ENCODE measurements at regions of chr18 and their contacts with region 1.

Region 1: GRCh38 chr18:63936156-63936931 is 12.8 kb upstream of the HMSD start:
- DNase-seq: peak; percentile 14 to 60 (median 24)
- ATAC-seq: peak; percentile 99
- H3K4me3 ChIP-seq: no peak overlapping the region
- H3K27ac ChIP-seq: no peak overlapping the region
- H3K4me1 ChIP-seq: peaks cover 0 to 6% of the 10 kb centered on the region in 2 experiments; a peak in 2 of 5 replicates
- H3K27me3 ChIP-seq: no peaks in the 10 kb centered on the region
- CTCF ChIP-seq: peak; percentile 34 to 48 (median 44); a peak in 5 of 6 replicates
- EP300 ChIP-seq: no peak
- POLR2A ChIP-seq: no peak
- RAD21 ChIP-seq: peak; percentile 38 to 39

Region 2: DNA sequence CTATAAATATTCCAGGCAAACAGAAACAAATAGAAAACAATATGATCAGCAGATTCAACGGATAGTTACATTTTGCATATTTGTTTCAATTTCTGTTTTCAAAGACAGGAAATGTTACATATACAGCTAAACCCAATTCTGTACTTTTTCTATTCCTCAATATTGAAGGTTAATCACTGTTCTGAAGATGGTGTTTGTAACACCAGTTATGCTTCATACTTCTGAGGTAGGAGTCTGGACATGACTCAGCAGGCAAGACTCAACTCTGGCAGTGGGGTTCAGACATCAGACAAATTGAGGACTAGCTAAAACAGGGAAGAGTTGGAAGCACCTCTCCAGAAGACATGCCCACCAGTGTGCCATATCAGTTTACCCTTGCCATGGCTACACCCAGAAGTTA is 332.6 kb before region 1 on chr18:
- CTCF ChIA-PET with region 1: no interaction called
- POLR2A ChIA-PET with region 1: no interaction called
- in situ Hi-C with region 1: no loop called
- intact Hi-C with region 1: no loop called
- DNase-seq: no peak
- ATAC-seq: no peak
- H3K4me3 ChIP-seq: no peak overlapping the region
- H3K27ac ChIP-seq: no peak overlapping the region
- H3K4me1 ChIP-seq: no peaks in the 10 kb centered on the region
- H3K27me3 ChIP-seq: no peaks in the 10 kb centered on the region
- CTCF ChIP-seq: no peak
- EP300 ChIP-seq: no peak
- POLR2A ChIP-seq: no peak
- RAD21 ChIP-seq: no peak

Region 3: GRCh38 chr18:63823518-63824219 is 112.7 kb before region 1 on chr18:
- CTCF ChIA-PET with region 1: no interaction called
- POLR2A ChIA-PET with region 1: no interaction called
- in situ Hi-C with region 1: no loop called
- intact Hi-C with region 1: no loop called
- DNase-seq: peak; percentile 6 to 18 (median 7)
- ATAC-seq: no peak
- H3K4me3 ChIP-seq: no peak overlapping the region
- H3K27ac ChIP-seq: no peak overlapping the region
- H3K4me1 ChIP-seq: no peaks in the 10 kb centered on the region
- H3K27me3 ChIP-seq: no peaks in the 10 kb centered on the region
- CTCF ChIP-seq: 0 out of 6 replicates have a peak, but pooled peaks of 1 of the 3 experiments have one; percentile 25
- EP300 ChIP-seq: no peak
- POLR2A ChIP-seq: no peak
- RAD21 ChIP-seq: peak in 1 of 2 experiments; percentile 13; a peak in 1 of 4 replicates

Region 4: GRCh38 chr18:63979409-63979920 is 43.1 kb after region 1 on chr18:
- CTCF ChIA-PET with region 1: no interaction called
- POLR2A ChIA-PET with region 1: no interaction called
- in situ Hi-C with region 1: no loop called
- intact Hi-C with region 1: loop called (anchors 2 kb)
- DNase-seq: peak; percentile 11 to 36 (median 22)
- ATAC-seq: peak; percentile 78
- H3K4me3 ChIP-seq: no peak overlapping the region
- H3K27ac ChIP-seq: no peak overlapping the region
- H3K4me1 ChIP-seq: no peaks in the 10 kb centered on the region
- H3K27me3 ChIP-seq: no peaks in the 10 kb centered on the region
- CTCF ChIP-seq: peak; percentile 47 to 65 (median 56)
- EP300 ChIP-seq: no peak
- POLR2A ChIP-seq: no peak
- RAD21 ChIP-seq: peak; percentile 56 to 66